Tibial artery (tissue), 4 donors: ENCODE measurements at regions of chr15 and their contacts with region 1.

Region 1: DNA sequence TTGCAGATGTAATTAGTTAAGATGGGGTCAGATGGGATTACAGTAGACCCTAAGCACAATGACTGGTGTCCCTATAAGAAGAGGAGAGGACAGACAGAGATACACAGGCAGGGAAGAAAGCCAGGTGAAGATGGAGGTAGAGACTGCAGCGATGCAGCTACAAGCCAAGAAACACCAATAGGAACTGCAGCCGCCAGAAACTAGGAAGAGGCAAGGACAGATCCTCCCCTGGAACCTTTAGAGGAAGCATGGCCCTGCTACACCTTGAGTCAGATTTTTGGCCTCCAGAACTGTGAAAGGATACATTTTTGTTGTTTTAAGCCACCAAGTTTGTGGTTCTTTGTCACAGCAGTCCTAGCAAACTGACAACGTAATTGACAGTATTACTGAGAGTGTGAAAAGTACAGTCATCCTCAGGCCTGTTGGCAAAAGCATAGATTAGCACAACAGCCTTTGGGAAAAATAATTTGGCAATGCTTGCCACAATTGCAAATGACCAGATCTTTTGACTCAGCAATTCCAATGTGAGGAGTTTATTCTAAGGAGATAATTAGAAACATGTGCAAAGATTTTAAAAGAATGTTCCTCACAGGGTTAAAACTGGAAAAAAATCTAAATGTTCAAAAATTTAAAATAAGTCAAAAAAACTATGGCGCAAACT is 82.6 kb upstream of the TJP1 start:
- DNase-seq: no peak
- H3K4me3 ChIP-seq: no peak overlapping the region
- H3K27ac ChIP-seq: no peak overlapping the region
- H3K4me1 ChIP-seq: no peaks in the 10 kb centered on the region
- H3K27me3 ChIP-seq: no peaks in the 10 kb centered on the region
- CTCF ChIP-seq: no peak

Region 2: GRCh38 chr15:29978411-29979382 is 73.8 kb after region 1 on chr15:
- intact Hi-C with region 1: loop called (anchors 5 kb)
- DNase-seq: no peak
- H3K4me3 ChIP-seq: no peak overlapping the region
- H3K27ac ChIP-seq: no peak overlapping the region
- H3K4me1 ChIP-seq: no peaks in the 10 kb centered on the region
- H3K27me3 ChIP-seq: no peaks in the 10 kb centered on the region
- CTCF ChIP-seq: peak in 1 of 2 experiments; percentile 23

Region 3: GRCh38 chr15:30008156-30008555 is 103.3 kb after region 1 on chr15:
- intact Hi-C with region 1: no loop called
- DNase-seq: no peak
- H3K4me3 ChIP-seq: no peak overlapping the region
- H3K27ac ChIP-seq: no peak overlapping the region
- H3K4me1 ChIP-seq: no peaks in the 10 kb centered on the region
- H3K27me3 ChIP-seq: peaks cover 0 to 6% of the 10 kb centered on the region in 2 donors
- CTCF ChIP-seq: no peak